ENCODE measurements at regions of chr2 and their contacts with region 1.

Region 1: DNA sequence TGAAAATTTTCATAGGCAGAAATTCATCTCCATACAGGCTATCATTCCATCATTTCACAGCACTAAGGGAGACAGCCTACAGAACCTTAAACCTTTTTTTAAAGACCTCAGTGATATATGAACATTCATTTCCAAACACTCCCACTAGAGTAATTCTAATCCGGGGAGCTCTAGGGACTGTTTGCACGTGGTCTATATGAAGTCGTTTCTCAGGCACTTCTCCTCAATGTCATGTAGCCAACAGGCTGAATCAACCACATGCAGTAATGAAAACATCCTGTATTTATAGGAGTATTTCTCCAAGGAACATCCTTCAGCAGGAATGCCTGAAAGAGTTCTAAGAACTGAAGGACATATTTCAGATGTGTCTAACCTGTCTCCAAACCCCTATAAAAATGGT is 97.3 kb upstream of the CREB1 start:
- DNase-seq: no peak
- H3K4me3 ChIP-seq: no peak overlapping the region
- H3K27ac ChIP-seq: no peak overlapping the region
- H3K4me1 ChIP-seq: no peaks in the 10 kb centered on the region
- H3K27me3 ChIP-seq: no peaks in the 10 kb centered on the region
- CTCF ChIP-seq: no peak

Region 2: GRCh38 chr2:207283356-207283755 is 149.1 kb before region 1 on chr2:
- intact Hi-C with region 1: loop called (anchors 10 kb)
- DNase-seq: peak in 1 of 2 donors; percentile 68
- H3K4me3 ChIP-seq: no peak overlapping the region
- H3K27ac ChIP-seq: no peak overlapping the region
- H3K4me1 ChIP-seq: no peaks in the 10 kb centered on the region
- H3K27me3 ChIP-seq: no peaks in the 10 kb centered on the region
- CTCF ChIP-seq: peak in 1 of 3 experiments; percentile 18

Region 3: DNA sequence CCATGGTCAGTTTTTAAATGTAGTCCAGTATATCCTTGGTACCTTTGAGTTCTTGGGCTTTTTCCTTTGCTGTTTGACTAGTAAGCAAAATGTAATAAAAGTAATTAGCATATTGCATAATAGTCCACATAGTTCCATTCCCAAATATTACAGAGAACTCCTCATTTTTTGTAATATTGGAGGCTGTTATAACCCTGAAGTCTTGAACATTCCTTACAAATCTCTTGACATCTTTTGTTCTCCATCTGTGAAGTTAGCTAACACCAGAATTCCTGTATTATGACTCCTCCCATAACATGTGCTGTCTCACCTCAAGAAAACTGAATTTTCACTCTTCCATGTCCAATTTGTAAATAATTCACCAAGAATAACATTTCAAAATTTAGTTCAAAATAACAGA is 114.4 kb after region 1 on chr2:
- intact Hi-C with region 1: no loop called
- DNase-seq: no peak
- H3K4me3 ChIP-seq: no peak overlapping the region
- H3K27ac ChIP-seq: no peak overlapping the region
- H3K4me1 ChIP-seq: peaks cover 3 to 12% of the 10 kb centered on the region in 2 donors
- H3K27me3 ChIP-seq: no peaks in the 10 kb centered on the region
- CTCF ChIP-seq: no peak

Measured in ascending aorta (tissue), 2 donors.